ENCODE measurements at regions of chr10 and their contacts with region 1.

Region 1: DNA sequence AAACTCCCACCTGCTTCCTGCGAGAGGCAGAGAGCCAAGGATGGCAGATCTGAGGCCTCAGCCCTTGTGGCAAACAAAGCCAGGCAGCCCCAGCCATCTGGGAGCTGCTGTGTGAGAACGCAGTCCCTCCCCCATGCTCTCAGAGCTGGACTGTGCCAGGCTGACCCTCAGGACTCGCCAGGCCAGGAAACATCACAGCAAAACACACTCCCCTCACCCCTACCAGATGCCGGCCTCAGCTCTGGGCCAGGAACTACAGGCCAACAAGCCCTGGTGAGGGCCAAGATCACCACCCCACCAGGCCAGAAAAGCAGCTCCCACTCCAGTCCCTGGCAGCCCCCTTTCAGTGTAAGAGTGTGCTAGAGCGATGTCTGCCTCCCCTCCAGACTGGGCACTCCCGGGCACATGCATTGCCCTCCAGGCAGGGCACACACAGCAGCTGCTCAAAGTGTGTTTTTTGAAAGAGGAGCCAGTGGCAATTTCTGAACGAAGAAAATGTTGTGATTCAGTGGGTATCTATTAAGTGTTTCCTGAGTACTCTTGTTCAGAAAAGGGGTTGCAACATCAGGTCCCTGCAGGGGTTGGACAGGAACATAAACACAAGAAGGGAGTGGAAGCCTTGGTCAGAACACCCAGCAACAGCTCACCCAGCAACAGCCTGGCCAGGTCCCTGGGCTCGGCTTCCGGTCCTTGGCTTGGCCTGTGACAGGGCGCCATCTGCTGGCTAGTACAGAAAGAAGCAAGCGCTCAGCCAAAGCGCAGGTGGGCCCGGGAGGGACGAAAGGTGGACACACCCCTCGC is 18.3 kb downstream of the LRRC20 start:
- DNase-seq: peak; percentile 85 to 93 (median 92)
- ATAC-seq: peak; percentile 100
- H3K4me3 ChIP-seq: no peak overlapping the region
- H3K27ac ChIP-seq: no peak overlapping the region
- H3K4me1 ChIP-seq: peaks cover 5 to 12% of the 10 kb centered on the region in 2 experiments; a peak in 4 of 5 replicates
- H3K27me3 ChIP-seq: peaks cover 0 to 4% of the 10 kb centered on the region in 2 experiments; a peak in 1 of 5 replicates
- CTCF ChIP-seq: peak; percentile 97 to 98 (median 97)
- EP300 ChIP-seq: 0 out of 2 replicates have a peak, but pooled peaks have one; percentile 7
- POLR2A ChIP-seq: no peak
- RAD21 ChIP-seq: peak; percentile 99

Region 2: DNA sequence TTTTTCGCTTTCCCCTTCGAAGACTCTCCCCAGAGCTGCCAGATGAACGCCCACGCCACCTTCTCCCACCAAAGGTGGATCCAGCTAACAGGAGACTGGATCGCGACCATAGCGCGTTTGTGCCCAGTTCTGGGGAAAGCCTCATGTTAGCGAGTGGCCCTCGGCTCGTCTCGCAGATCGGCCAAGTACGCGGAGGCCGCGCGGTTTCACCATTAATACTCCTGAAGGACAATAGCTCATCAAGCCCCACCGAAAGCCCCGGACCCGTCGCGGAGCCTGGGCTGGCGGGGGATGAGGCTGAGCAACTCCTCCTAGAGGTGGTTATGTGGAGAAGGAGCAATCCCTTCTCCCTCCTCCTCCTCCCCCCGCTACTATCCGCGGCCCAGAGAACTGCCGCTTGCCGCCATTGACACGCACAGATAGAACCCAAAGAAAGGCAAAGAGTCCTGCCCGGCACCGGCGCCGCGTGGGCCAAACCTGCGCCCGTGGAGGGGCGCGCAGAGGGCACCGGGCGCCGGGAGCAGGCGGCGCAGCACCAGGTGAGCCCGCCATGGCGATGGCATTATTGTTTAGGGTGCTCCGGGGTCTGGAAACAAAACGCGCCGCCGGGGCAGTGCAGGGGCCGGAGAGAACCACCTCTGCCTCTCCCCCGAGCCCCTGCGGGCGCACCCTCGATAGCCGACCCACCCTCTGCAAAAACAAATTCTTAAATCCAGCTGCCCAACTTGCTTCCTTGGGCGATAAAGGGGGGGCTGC is 311.5 kb before region 1 on chr10 and contains the start of gene MACROH2A2:
- CTCF ChIA-PET with region 1: no interaction called
- POLR2A ChIA-PET with region 1: no interaction called
- in situ Hi-C with region 1: no loop called
- intact Hi-C with region 1: no loop called
- DNase-seq: peak in 2 of 4 experiments; percentile 13 to 21
- ATAC-seq: peak; percentile 62
- H3K4me3 ChIP-seq: no peak within 1 kb of the TSS
- H3K27ac ChIP-seq: no peak within 1 kb of the TSS
- H3K4me1 ChIP-seq: peaks cover 0 to 16% of the 10 kb centered on the region in 2 experiments; a peak in 1 of 5 replicates
- H3K27me3 ChIP-seq: peaks cover 29 to 30% of the 10 kb centered on the region in 2 experiments
- CTCF ChIP-seq: no peak
- EP300 ChIP-seq: no peak
- POLR2A ChIP-seq: no peak
- RAD21 ChIP-seq: no peak
- polyA plus RNA-seq, gene MACROH2A2: 0.07 TPM in 1 of 2 experiments, not detected in the other

Region 3: DNA sequence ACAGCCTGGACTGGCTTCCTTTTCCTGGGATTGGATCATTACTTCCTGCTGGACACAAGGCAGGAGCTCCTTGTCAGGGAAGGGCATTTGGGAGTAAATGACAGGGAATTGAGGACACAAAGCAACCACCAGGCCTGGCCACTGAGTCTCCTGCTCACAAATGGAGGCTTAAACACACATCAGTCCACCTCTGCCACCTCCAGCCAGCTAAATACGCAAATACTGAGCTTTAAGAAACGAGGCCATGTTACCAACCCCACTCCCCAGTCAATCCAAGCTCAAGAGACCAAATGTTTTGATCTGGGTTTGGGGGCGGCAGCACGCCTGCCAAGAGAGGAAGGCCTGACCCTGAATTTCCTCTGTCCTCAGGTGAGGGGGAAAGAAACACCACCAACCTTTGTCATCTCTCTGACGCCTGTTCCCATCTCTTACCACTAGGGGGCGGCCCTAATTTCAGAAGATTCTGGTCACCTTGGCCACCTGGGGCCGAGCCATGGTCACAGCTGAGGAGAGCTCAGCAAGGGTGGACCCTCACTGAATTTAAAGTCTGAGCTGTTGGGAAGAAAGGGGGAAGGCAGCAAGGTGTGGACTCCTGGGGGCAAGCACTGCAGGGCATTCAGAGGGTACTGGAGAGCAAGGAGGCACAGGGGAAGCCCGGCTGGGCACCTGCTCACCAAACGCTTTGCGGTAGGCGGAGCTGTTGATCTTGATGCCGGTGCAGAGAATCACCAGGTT is 248.1 kb before region 1 on chr10:
- CTCF ChIA-PET with region 1: interaction called, 13 read pairs
- POLR2A ChIA-PET with region 1: no interaction called
- in situ Hi-C with region 1: no loop called
- intact Hi-C with region 1: loop called (anchors 2 kb)
- DNase-seq: peak; percentile 78 to 84 (median 82)
- ATAC-seq: peak; percentile 83
- H3K4me3 ChIP-seq: no peak overlapping the region
- H3K27ac ChIP-seq: no peak overlapping the region
- H3K4me1 ChIP-seq: 0 out of 5 replicates have a peak, but pooled peaks cover 0 to 3% of the 10 kb centered on the region in 2 experiments
- H3K27me3 ChIP-seq: no peaks in the 10 kb centered on the region; a peak in 1 of 5 replicates
- CTCF ChIP-seq: peak; percentile 85 to 97 (median 89)
- EP300 ChIP-seq: no peak
- POLR2A ChIP-seq: no peak
- RAD21 ChIP-seq: peak in 1 of 2 experiments; percentile 64; a peak in 3 of 4 replicates

Region 4: GRCh38 chr10:70331486-70332268 is 32.5 kb before region 1 on chr10:
- CTCF ChIA-PET with region 1: no interaction called
- POLR2A ChIA-PET with region 1: interaction called, 3 read pairs
- in situ Hi-C with region 1: no loop called
- intact Hi-C with region 1: loop called (anchors 2 kb)
- DNase-seq: peak; percentile 84 to 95 (median 87)
- ATAC-seq: peak; percentile 92
- H3K4me3 ChIP-seq: no peak overlapping the region; the same call in 1 of the 2 replicates
- H3K27ac ChIP-seq: peak overlapping the region; percentile 60; the same call in 2 of the 3 replicates
- H3K4me1 ChIP-seq: peaks cover 14 to 23% of the 10 kb centered on the region in 2 experiments
- H3K27me3 ChIP-seq: no peaks in the 10 kb centered on the region
- CTCF ChIP-seq: peak; percentile 70 to 73 (median 73)
- EP300 ChIP-seq: peak; percentile 77
- POLR2A ChIP-seq: no peak
- RAD21 ChIP-seq: peak; percentile 51 to 78

Region 5: DNA sequence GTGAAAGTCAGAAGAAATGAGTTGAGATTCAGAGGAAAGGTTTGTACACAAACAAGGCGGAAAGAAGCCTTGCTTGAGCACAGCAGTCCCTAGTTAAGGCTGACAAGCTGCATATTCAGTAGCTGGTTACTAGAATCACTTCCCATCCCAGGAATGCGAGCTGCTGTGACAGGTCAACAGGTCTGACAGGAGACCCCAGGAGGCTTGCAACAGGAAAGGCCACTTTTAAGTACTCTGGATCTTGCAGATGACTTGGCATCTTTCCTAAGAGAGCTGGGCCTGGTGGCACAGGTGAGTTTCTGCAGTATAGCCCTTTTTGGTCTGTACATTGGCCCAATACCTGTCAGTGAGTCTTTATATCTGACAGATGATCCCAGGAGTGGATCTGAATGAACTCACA is 812.5 kb after region 1 on chr10:
- CTCF ChIA-PET with region 1: no interaction called
- POLR2A ChIA-PET with region 1: no interaction called
- in situ Hi-C with region 1: no loop called
- intact Hi-C with region 1: no loop called
- DNase-seq: no peak
- ATAC-seq: no peak
- H3K4me3 ChIP-seq: no peak overlapping the region
- H3K27ac ChIP-seq: no peak overlapping the region
- H3K4me1 ChIP-seq: no peaks in the 10 kb centered on the region
- H3K27me3 ChIP-seq: peaks cover 31 to 66% of the 10 kb centered on the region in 2 experiments
- CTCF ChIP-seq: no peak
- EP300 ChIP-seq: no peak
- POLR2A ChIP-seq: no peak
- RAD21 ChIP-seq: no peak

Measured in K562 (cell line).